Cardiac septum (tissue), 1 donor: ENCODE measurements at regions of chr11 and their contacts with region 1.

Region 1: GRCh38 chr11:124837491-124837856 is 27.8 kb upstream of the ROBO3 start:
- DNase-seq: no peak

Region 2: GRCh38 chr11:124644426-124645280 is 192.8 kb before region 1 on chr11:
- intact Hi-C with region 1: loop called (anchors 2 kb)
- DNase-seq: no peak

Region 3: DNA sequence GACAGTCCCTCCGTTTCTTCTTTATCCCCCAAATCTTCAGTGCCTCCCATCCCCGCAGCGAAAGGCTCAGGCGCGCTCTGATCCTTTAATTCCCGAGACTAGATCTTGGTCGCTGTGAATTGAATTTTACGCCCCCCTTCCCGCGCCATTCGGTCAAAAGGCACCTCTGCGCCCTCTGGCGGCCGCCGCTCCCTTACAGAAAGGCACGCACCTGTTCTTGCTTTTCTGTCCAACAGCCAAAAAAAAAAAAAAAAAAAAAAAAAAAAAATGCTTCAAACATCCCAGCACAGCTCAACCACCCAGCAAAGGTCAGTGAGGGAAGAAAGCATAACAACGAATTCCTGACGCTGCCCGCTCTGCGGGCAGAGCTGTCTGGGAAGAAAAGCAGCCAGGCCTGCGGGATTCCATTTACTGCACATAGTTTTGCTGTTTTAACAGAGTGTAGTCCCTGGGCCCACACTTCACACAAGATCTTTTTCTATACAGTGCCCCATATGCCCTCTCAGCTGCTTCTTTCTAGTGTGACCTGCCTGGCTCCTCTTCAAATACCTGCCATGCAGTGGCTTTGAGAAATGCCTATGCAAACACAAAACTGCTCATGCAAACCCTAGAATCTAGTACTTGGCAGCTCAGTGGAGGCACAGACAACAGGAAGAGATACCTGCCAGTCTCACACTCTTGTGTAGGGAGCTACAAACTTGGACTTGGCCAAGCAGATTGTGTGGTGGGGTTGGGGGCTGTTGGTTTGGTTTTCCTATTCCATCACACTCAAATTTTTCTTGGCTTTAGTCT is 74.1 kb before region 1 on chr11:
- intact Hi-C with region 1: loop called (anchors 5 kb)
- DNase-seq: peak; percentile 89

Region 4: GRCh38 chr11:124800226-124800929 is 37.1 kb before region 1 on chr11 and contains the start of gene MSANTD2:
- intact Hi-C with region 1: loop called (anchors 2 kb)
- DNase-seq: peak; percentile 93
- total RNA-seq, gene MSANTD2: 5.3 TPM